ENCODE measurements at regions of chr1 and their contacts with region 1.

Region 1: DNA sequence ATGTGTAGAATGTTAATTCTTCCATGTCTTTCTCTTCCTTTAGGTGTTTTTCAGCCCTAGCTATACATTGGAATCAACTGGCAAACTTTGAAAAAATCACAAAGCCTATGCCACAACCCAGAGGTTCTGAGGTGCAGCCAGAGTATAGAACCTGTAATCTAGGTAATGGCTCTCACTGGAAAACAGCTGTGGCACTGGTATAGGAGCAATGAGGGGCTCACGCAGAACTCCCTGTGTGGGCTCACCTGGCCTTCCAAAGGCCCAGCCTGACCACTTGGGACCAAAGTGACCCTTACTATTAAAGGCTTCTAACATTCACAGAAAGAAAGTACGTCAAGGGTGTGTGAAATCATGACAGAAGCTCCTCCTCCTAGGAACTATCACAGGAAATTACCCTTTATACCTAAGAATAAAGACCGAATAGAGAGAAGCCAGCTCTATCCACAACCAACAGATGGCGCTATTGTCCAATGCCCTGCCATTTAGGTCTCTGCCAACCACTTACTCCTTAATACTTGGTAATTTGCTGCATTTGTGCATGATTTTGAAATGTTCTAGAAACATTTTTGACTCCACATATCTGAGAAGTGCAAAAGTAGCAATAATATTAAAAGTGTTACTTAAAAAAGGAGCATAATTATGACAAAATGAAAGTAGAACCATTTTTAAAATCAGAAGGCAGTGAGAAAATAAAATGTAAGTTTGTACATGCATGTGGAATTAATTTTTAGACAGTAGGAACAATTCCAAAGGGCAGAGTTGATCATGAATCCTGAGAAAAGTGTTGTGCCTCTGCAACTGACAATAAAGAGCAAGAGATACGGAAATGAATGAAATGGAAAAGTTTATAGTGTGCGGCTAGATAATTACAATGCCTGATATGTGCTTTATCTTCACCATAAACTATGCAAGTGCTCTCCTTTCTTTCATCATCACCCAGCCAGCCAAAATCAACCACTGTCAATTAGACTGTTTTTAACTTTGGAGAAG is 93.1 kb upstream of the HAO2 start:
- DNase-seq: no peak
- H3K4me3 ChIP-seq: no peak overlapping the region
- H3K27ac ChIP-seq: no peak overlapping the region
- H3K4me1 ChIP-seq: no peaks in the 10 kb centered on the region
- H3K27me3 ChIP-seq: peaks cover 5% of the 10 kb centered on the region
- CTCF ChIP-seq: peak; percentile 76

Region 2: GRCh38 chr1:118791094-118791691 is 484.2 kb before region 1 on chr1:
- intact Hi-C with region 1: loop called (anchors 10 kb)
- DNase-seq: no peak
- H3K4me3 ChIP-seq: no peak overlapping the region
- H3K27ac ChIP-seq: no peak overlapping the region
- H3K4me1 ChIP-seq: no peaks in the 10 kb centered on the region
- H3K27me3 ChIP-seq: no peaks in the 10 kb centered on the region
- CTCF ChIP-seq: no peak

Region 3: GRCh38 chr1:119220991-119221390 is 54.4 kb before region 1 on chr1:
- intact Hi-C with region 1: no loop called
- DNase-seq: no peak
- H3K4me3 ChIP-seq: no peak overlapping the region
- H3K27ac ChIP-seq: no peak overlapping the region
- H3K4me1 ChIP-seq: no peaks in the 10 kb centered on the region
- H3K27me3 ChIP-seq: no peaks in the 10 kb centered on the region
- CTCF ChIP-seq: no peak